ENCODE measurements at regions of chr3 and their contacts with region 1.

Region 1: DNA sequence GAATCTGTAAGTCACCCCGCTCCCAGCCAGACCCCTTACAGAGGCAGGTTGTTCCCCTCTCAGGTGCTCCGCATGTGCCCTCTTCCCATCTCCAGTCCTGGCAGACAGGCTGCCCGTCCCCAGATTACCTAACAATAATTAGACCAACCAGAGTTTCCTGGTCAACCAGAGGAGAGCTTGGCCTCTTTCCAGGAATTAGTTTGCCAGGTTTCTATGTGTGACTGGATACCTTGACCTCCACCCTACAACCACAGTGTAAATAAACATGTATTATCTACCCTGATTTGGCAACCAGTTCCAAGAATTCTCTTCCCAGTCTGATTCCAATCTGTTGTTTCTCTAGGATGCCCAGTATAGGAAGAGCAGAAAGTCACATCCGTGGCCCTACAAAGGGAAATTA is 178.0 kb upstream of the UMPS start:
- DNase-seq: no peak
- ATAC-seq: no peak
- H3K4me3 ChIP-seq: no peak overlapping the region
- H3K27ac ChIP-seq: no peak overlapping the region
- H3K4me1 ChIP-seq: peaks cover 0 to 2% of the 10 kb centered on the region in 2 donors
- H3K27me3 ChIP-seq: no peaks in the 10 kb centered on the region

Region 2: DNA sequence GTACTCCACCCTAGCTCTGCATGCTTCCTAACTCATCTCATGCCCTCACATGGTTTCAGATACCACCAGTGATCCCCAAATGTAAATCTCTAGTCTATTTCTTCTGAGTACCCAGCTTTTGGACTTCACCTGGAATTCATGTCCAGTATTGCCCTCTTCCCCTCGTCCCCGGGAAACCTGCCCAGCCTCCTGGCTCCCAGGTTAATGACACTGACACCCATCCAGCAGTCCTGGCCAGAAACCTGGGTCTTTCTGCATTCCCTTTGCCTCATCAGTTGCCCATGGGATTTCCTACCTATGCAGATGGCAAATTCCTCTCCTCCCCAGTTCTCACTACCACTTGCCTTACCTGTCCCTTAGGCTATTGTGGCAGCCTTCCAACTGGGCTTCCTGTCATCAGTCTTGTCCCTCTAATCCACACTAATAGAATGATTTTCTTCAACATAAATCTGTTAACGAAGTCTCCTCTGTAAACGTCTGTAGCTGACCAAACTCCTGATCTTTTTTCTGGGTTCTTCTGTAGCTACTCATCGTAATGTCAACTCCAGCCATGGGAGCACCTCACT is 652.9 kb before region 1 on chr3:
- intact Hi-C with region 1: no loop called
- DNase-seq: no peak
- ATAC-seq: no peak
- H3K4me3 ChIP-seq: no peak overlapping the region
- H3K27ac ChIP-seq: no peak overlapping the region
- H3K4me1 ChIP-seq: no peaks in the 10 kb centered on the region
- H3K27me3 ChIP-seq: no peaks in the 10 kb centered on the region

Region 3: GRCh38 chr3:124492811-124493210 is 59.4 kb before region 1 on chr3:
- intact Hi-C with region 1: loop called in 1 of 2 experiments (anchors 5 kb)
- DNase-seq: no peak
- ATAC-seq: peak; percentile 10
- H3K4me3 ChIP-seq: no peak overlapping the region
- H3K27ac ChIP-seq: no peak overlapping the region
- H3K4me1 ChIP-seq: peaks cover 0 to 2% of the 10 kb centered on the region in 2 donors
- H3K27me3 ChIP-seq: no peaks in the 10 kb centered on the region

Region 4: DNA sequence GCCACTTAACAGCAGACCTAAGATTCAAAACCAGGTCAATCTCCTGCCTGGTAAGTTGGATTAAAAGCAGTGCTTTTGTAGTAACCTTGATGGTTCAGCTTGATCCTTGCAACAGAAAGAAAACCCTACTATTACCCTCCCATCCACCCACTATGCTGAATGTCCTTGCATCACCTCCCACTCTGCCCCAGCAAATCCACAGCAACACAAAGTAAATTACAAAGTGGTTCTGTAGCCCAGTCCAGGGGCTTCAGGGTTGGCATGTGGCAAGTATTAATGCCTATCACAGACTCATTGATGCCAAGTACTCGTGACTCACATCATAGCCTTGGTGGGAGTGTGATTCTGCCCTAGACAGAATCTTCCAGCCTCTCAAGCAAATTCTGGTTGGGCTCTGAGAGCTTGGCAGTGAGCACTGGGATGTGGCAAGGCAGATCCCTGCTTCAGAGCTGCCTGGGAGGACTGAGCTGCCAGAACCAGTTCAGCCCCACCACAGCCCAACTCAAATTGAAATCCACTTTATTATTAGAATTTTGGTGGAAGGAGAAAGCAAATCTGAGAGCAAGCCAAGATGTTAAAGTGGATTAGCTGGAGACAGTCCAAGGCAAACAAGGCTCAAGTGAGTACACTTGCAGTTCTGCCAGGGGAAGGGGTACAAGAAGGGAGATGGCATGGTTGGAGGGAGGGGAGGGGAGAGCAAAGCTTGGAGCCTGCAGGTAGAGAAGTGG is 47.7 kb before region 1 on chr3:
- intact Hi-C with region 1: loop called in 1 of 2 experiments (anchors 5 kb)
- DNase-seq: peak; percentile 85 to 89
- ATAC-seq: peak; percentile 84
- H3K4me3 ChIP-seq: no peak overlapping the region
- H3K27ac ChIP-seq: peak overlapping the region in 1 of 2 donors; percentile 20
- H3K4me1 ChIP-seq: peaks cover 0 to 2% of the 10 kb centered on the region in 2 donors
- H3K27me3 ChIP-seq: no peaks in the 10 kb centered on the region

Region 5: GRCh38 chr3:124520970-124521369 is 31.3 kb before region 1 on chr3:
- intact Hi-C with region 1: no loop called
- DNase-seq: no peak
- ATAC-seq: no peak
- H3K4me3 ChIP-seq: no peak overlapping the region
- H3K27ac ChIP-seq: no peak overlapping the region
- H3K4me1 ChIP-seq: no peaks in the 10 kb centered on the region
- H3K27me3 ChIP-seq: no peaks in the 10 kb centered on the region